Activated CD8-positive, alpha-beta T cell treated with anti-CD3 and anti-CD28 coated beads for 36 hours (primary cell): ENCODE measurements at regions of chr3 and their contacts with region 1.

Region 1: DNA sequence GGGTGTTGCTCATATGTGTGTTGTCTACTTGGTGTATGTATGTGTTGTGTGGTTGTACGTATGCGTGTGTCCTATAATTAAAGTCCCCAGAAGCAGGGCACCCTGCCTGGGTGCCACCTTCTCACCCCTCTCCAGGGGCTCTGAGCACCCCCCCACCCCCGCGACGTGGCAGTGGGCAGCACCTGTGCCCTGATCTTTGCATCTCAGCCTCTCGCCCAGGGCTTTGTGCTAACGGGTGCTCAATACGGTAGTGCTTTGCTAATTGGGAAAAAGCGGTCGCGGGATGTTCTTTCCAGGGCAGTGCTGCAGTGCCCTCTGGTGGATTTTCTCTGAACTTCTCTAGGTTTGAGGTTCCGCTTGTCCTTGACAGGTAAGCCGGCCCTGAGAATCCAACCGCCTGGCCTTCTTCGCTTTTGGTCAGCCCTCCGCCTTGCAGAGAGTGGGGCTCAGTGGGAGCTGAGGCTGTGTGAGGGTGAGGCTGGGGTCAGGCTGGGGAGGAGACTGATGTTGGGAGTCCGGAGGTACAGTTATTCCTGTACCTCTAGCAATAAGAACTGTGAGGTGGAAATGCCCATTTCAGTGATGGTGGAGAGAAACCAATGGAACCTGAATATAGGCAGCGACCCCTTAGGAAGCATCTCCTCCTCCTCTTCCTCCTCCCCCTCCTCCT is 17.6 kb upstream of the EPHB3 start:
- DNase-seq: peak; percentile 83
- ATAC-seq: peak; percentile 89
- H3K4me3 Mint-ChIP-seq: no peak overlapping the region
- H3K27ac Mint-ChIP-seq: no peak overlapping the region
- H3K4me1 Mint-ChIP-seq: peaks cover 4% of the 10 kb centered on the region
- H3K27me3 Mint-ChIP-seq: peaks cover 28% of the 10 kb centered on the region
- CTCF ChIP-seq: peak; percentile 86

Region 2: GRCh38 chr3:184399410-184399809 is 144.6 kb before region 1 on chr3:
- CTCF ChIA-PET with region 1: no interaction called
- POLR2A ChIA-PET with region 1: no interaction called
- intact Hi-C with region 1: no loop called
- DNase-seq: no peak
- ATAC-seq: no peak
- H3K4me3 Mint-ChIP-seq: no peak overlapping the region
- H3K27ac Mint-ChIP-seq: no peak overlapping the region
- H3K4me1 Mint-ChIP-seq: no peaks in the 10 kb centered on the region
- H3K27me3 Mint-ChIP-seq: peaks cover 4% of the 10 kb centered on the region
- CTCF ChIP-seq: no peak

Region 3: DNA sequence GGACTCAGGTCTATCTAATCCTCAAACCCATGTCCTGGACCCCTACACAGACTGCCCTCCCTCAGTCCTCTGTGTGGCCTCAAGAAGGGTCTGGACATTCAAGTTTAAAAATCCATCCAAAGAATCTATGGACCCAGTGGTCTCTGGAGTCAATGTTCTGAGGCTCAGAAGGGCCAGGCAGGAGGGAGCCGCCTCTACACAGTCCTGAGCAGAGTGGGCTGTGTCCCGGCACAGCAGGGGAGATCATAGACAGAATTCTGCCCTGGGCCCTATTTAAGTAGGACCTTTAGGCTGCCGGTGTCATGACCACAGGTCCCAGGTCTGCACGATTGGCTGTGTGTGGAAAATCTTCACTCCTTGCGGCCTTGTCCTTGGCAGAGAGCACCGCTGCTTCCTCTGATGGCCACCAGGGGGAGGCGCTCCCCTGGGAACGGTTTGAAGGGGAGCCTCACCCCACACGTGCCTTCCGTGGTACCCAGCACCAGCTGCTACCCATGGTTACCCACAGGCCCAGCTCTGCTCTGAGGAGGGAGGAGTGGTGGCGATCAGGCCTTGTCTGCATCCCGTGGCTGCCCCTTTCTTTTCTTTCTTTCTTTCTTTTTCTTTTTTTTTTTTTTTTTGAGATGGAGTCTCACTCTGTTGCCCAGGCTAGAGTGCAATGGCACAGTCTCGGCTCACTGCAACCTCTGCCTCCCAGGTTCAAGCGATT is 126.2 kb before region 1 on chr3:
- CTCF ChIA-PET with region 1: interaction called, 16 read pairs
- POLR2A ChIA-PET with region 1: interaction called, 3 read pairs
- intact Hi-C with region 1: loop called (anchors 2 kb)
- DNase-seq: peak; percentile 78
- ATAC-seq: peak; percentile 98
- H3K4me3 Mint-ChIP-seq: no peak overlapping the region
- H3K27ac Mint-ChIP-seq: no peak overlapping the region
- H3K4me1 Mint-ChIP-seq: no peaks in the 10 kb centered on the region
- H3K27me3 Mint-ChIP-seq: peaks cover under 1% of the 10 kb centered on the region
- CTCF ChIP-seq: peak; percentile 87

Region 4: DNA sequence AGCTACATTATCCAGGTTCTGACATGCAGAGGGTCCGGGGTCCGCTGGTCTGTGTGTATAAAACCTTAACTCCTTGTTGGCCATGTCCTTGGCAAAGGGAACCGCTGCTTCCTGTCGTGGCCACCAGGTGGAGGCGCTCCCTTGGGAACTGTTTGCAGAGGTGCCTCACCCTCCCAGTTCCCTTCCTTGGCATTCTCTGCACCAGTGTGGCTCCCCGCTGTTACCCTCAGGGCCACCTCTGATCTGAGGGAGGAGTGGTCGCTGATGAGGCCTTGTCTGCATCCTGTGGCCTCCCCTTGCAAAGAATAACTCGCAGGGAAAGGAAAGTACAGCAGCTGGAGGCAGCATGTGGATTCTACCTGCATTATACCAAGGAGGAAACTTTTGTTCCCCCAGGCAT is 74.6 kb before region 1 on chr3:
- CTCF ChIA-PET with region 1: interaction called, 21 read pairs
- POLR2A ChIA-PET with region 1: no interaction called
- intact Hi-C with region 1: loop called (anchors 1 kb)
- DNase-seq: peak; percentile 56
- ATAC-seq: peak; percentile 55
- H3K4me3 Mint-ChIP-seq: no peak overlapping the region
- H3K27ac Mint-ChIP-seq: no peak overlapping the region
- H3K4me1 Mint-ChIP-seq: peaks cover 20% of the 10 kb centered on the region
- H3K27me3 Mint-ChIP-seq: peaks cover 26% of the 10 kb centered on the region
- CTCF ChIP-seq: peak; percentile 63

Region 5: GRCh38 chr3:184513276-184514170 is 30.5 kb before region 1 on chr3:
- CTCF ChIA-PET with region 1: interaction called, 84 read pairs
- POLR2A ChIA-PET with region 1: no interaction called
- intact Hi-C with region 1: no loop called
- DNase-seq: peak; percentile 91
- ATAC-seq: peak; percentile 100
- H3K4me3 Mint-ChIP-seq: peak overlapping the region; percentile 51
- H3K27ac Mint-ChIP-seq: no peak overlapping the region
- H3K4me1 Mint-ChIP-seq: peaks cover 3% of the 10 kb centered on the region
- H3K27me3 Mint-ChIP-seq: peaks cover 48% of the 10 kb centered on the region
- CTCF ChIP-seq: peak; percentile 90

Region 6: GRCh38 chr3:184583578-184584425 is 39.8 kb after region 1 on chr3:
- CTCF ChIA-PET with region 1: no interaction called
- POLR2A ChIA-PET with region 1: no interaction called
- intact Hi-C with region 1: no loop called
- DNase-seq: no peak
- ATAC-seq: peak; percentile 59
- H3K4me3 Mint-ChIP-seq: no peak overlapping the region
- H3K27ac Mint-ChIP-seq: no peak overlapping the region
- H3K4me1 Mint-ChIP-seq: peaks cover 4% of the 10 kb centered on the region
- H3K27me3 Mint-ChIP-seq: peaks cover 27% of the 10 kb centered on the region
- CTCF ChIP-seq: peak; percentile 41

Region 7: DNA sequence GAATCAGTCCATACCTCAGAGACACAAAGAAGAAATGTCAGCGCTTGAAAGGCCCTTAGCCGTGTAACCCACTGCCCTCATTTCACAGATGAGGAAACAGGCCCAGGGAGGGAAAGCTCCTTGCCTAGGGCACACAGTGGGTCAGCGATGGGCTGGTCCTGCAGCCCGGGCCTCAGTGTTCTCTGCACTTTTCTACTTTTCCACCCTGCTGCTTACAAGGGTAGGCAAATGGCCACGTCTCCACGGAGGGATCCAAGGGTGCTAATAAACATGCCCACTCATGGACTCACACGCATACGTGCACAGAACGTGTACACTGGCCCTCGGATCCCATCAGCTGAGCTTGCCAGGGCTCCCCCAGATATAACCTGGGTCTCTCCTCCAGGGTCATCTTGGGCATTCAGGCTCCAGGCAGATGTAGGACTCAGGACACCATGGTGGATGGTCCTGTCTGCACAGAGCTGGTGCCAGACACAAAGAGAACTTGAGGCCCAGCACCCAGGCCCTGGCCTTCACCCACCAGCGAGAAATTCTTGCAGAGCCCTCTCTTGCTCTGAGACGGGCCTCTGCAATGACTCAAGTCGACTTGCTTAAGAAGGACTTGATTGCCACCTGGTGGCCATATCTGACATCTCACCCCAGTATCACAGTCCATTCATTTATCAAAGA is 233.5 kb after region 1 on chr3:
- CTCF ChIA-PET with region 1: interaction called, 10 read pairs
- POLR2A ChIA-PET with region 1: interaction called, 3 read pairs
- intact Hi-C with region 1: no loop called
- DNase-seq: peak; percentile 96
- ATAC-seq: peak; percentile 99
- H3K4me3 Mint-ChIP-seq: no peak overlapping the region
- H3K27ac Mint-ChIP-seq: no peak overlapping the region
- H3K4me1 Mint-ChIP-seq: no peaks in the 10 kb centered on the region
- H3K27me3 Mint-ChIP-seq: peaks cover 15% of the 10 kb centered on the region
- CTCF ChIP-seq: peak; percentile 74